ENCODE measurements at regions of chr12 and their contacts with region 1.

Region 1: GRCh38 chr12:94101738-94102660 is 46.4 kb upstream of the PLXNC1 start:
- DNase-seq: peak; percentile 65
- ATAC-seq: peak; percentile 87
- H3K4me3 ChIP-seq: peak overlapping the region; percentile 65 to 81
- H3K27ac ChIP-seq: 0 out of 2 replicates have a peak overlapping the region, but pooled peaks have one; percentile 35
- H3K4me1 ChIP-seq: peaks cover 22% of the 10 kb centered on the region
- H3K27me3 ChIP-seq: no peaks in the 10 kb centered on the region
- CTCF ChIP-seq: peak; percentile 75

Region 2: GRCh38 chr12:93419388-93420034 is 682.5 kb before region 1 on chr12:
- CTCF ChIA-PET with region 1: interaction called, 3 read pairs
- POLR2A ChIA-PET with region 1: no interaction called
- in situ Hi-C with region 1: no loop called
- intact Hi-C with region 1: loop called (anchors 10 kb)
- DNase-seq: no peak
- ATAC-seq: no peak
- H3K4me3 ChIP-seq: no peak overlapping the region
- H3K27ac ChIP-seq: no peak overlapping the region
- H3K4me1 ChIP-seq: peaks cover 36% of the 10 kb centered on the region
- H3K27me3 ChIP-seq: no peaks in the 10 kb centered on the region
- CTCF ChIP-seq: peak; percentile 71

Region 3: DNA sequence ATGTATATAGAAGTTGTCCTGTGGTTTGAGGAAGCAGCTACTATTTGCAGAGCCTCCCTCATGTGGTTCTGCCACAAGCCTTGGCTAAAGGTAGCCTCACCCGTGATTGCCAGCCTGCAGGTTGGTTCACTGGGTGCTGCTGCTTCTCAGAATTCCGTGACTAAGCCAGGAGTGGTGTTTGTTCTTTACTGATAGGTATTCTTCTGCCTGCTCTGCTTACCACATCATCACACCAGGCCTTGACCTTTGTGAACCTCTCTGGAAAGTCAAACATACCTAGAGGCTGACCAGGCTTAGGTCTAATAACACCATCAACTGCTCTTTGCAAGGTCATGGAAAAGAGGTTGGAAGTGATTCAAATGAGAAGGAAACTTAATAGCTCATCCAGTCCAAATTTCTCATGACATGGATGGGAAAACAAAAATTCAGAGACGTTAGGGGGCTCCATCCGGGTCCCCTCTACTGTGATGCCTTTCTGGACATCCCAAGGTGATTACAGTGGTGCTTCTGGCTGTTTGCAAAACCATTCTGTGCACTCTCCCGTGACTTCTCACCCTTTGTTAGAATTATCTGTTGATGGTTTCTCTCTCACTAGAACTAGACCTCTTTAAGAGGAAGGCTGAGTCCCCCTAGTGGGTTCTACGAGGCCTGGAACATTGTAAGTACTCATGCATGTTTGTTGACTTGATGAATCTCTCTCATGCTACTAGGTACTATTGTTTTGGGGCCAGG is 538.0 kb before region 1 on chr12:
- CTCF ChIA-PET with region 1: interaction called, 6 read pairs
- POLR2A ChIA-PET with region 1: no interaction called
- in situ Hi-C with region 1: no loop called
- intact Hi-C with region 1: loop called (anchors 2 kb)
- DNase-seq: peak; percentile 98
- ATAC-seq: peak; percentile 98
- H3K4me3 ChIP-seq: no peak overlapping the region
- H3K27ac ChIP-seq: peak overlapping the region; percentile 85
- H3K4me1 ChIP-seq: peaks cover 27% of the 10 kb centered on the region
- H3K27me3 ChIP-seq: no peaks in the 10 kb centered on the region
- CTCF ChIP-seq: peak; percentile 70

Region 4: GRCh38 chr12:93569656-93570551 is 532.1 kb before region 1 on chr12:
- CTCF ChIA-PET with region 1: interaction called, 13 read pairs
- POLR2A ChIA-PET with region 1: interaction called, 19 read pairs
- in situ Hi-C with region 1: no loop called
- intact Hi-C with region 1: loop called (anchors 2 kb)
- DNase-seq: no peak
- ATAC-seq: peak; percentile 75
- H3K4me3 ChIP-seq: peak overlapping the region; percentile 71 to 96
- H3K27ac ChIP-seq: peak overlapping the region; percentile 78
- H3K4me1 ChIP-seq: peaks cover 16% of the 10 kb centered on the region
- H3K27me3 ChIP-seq: no peaks in the 10 kb centered on the region
- CTCF ChIP-seq: peak; percentile 93

Region 5: GRCh38 chr12:93766796-93767523 is 335.0 kb before region 1 on chr12:
- CTCF ChIA-PET with region 1: interaction called, 33 read pairs
- POLR2A ChIA-PET with region 1: no interaction called
- in situ Hi-C with region 1: no loop called
- intact Hi-C with region 1: loop called (anchors 1 kb)
- DNase-seq: no peak
- ATAC-seq: peak; percentile 90
- H3K4me3 ChIP-seq: no peak overlapping the region
- H3K27ac ChIP-seq: no peak overlapping the region
- H3K4me1 ChIP-seq: peaks cover 3% of the 10 kb centered on the region
- H3K27me3 ChIP-seq: no peaks in the 10 kb centered on the region
- CTCF ChIP-seq: peak; percentile 75

Region 6: DNA sequence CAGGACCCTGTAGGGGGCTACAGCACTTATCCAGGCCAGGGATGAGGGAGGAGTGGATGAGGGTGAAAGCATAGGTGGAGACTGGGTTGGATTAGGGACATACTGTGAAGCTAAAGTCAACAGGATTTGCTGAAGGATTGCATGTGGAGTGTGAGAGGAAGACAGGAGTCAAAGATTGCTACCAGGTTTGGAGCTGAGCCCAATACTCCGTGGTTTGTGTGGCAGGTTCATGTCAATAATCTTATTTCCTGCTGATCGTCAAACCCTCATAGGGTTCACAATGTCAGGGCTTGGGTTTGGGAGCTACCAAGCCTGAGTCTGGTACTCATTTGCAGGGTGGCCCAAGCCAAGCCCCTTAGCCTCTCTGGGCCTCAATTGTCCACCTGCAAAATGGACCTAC is 30.7 kb before region 1 on chr12:
- CTCF ChIA-PET with region 1: interaction called, 3 read pairs
- POLR2A ChIA-PET with region 1: interaction called, 10 read pairs
- in situ Hi-C with region 1: no loop called
- intact Hi-C with region 1: no loop called
- DNase-seq: no peak
- ATAC-seq: no peak
- H3K4me3 ChIP-seq: no peak overlapping the region
- H3K27ac ChIP-seq: no peak overlapping the region
- H3K4me1 ChIP-seq: no peaks in the 10 kb centered on the region
- H3K27me3 ChIP-seq: no peaks in the 10 kb centered on the region
- CTCF ChIP-seq: no peak

Measured in Panc1 (cell line).